Dendritic cell treated with granulocyte-macrophage colony-stimulating factor and Interleukin-4, amounts not matched to agents 40 ng/mL and 50 ng/mL, for 4 days (primary cell): ENCODE measurements at regions of chr11 and their contacts with region 1.

Region 1: GRCh38 chr11:47552566-47553416 is at the start of gene CELF1:
- H3K4me3 Mint-ChIP-seq: peak within 1 kb of the TSS; percentile 97
- H3K27ac Mint-ChIP-seq: peak within 1 kb of the TSS; percentile 99
- H3K4me1 Mint-ChIP-seq: peaks cover 46% of the 10 kb centered on the region
- H3K27me3 Mint-ChIP-seq: no peaks in the 10 kb centered on the region

Region 2: GRCh38 chr11:47355283-47356128 is 197.3 kb before region 1 on chr11:
- intact Hi-C with region 1: no loop called
- H3K4me3 Mint-ChIP-seq: no peak overlapping the region
- H3K27ac Mint-ChIP-seq: no peak overlapping the region
- H3K4me1 Mint-ChIP-seq: peaks cover 4% of the 10 kb centered on the region
- H3K27me3 Mint-ChIP-seq: no peaks in the 10 kb centered on the region

Region 3: GRCh38 chr11:47499614-47500013 is 53.2 kb before region 1 on chr11:
- intact Hi-C with region 1: loop called (anchors 2 kb)
- H3K4me3 Mint-ChIP-seq: no peak overlapping the region
- H3K27ac Mint-ChIP-seq: no peak overlapping the region
- H3K4me1 Mint-ChIP-seq: peaks cover 49% of the 10 kb centered on the region
- H3K27me3 Mint-ChIP-seq: no peaks in the 10 kb centered on the region

Region 4: GRCh38 chr11:47514825-47515647 is 37.8 kb before region 1 on chr11:
- intact Hi-C with region 1: loop called (anchors 5 kb)
- H3K4me3 Mint-ChIP-seq: peak overlapping the region; percentile 50
- H3K27ac Mint-ChIP-seq: peak overlapping the region; percentile 75
- H3K4me1 Mint-ChIP-seq: peaks cover 74% of the 10 kb centered on the region
- H3K27me3 Mint-ChIP-seq: no peaks in the 10 kb centered on the region

Region 5: DNA sequence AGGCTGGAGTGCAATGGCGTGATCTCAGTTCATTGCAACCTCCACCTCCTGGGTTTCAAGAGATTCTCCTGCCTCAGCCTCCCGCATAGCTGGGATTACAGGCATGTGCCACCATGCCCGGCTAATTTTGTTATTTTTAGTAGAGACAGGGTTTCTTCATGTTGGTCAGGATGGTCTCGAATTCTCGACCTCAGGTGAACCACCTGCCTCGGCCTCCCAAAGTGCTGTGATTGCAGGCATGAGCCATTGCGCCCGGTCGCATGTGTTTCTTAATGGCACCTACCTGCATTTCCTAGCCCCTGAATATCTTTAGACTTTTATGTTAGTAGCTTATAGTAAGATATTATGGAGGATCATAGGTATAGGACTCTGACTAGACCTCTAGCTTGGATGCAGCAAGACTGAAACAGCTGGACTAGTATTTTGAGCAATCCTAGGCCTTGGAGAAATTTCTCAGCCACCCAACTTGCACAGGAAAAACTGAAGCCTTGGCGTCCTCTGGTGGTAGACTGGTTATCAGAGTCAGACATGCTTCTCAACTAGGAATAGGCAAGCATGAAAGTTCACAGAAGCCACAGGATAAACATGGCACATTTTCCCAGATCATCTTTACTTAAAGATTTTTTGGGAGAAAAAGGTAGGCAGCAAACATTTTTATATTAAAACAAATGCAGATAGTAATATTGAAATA is 64.1 kb after region 1 on chr11:
- intact Hi-C with region 1: loop called (anchors 10 kb)
- H3K4me3 Mint-ChIP-seq: no peak overlapping the region
- H3K27ac Mint-ChIP-seq: no peak overlapping the region
- H3K4me1 Mint-ChIP-seq: peaks cover 13% of the 10 kb centered on the region
- H3K27me3 Mint-ChIP-seq: no peaks in the 10 kb centered on the region

Region 6: GRCh38 chr11:47628026-47628425 is 75.2 kb after region 1 on chr11:
- intact Hi-C with region 1: no loop called
- H3K4me3 Mint-ChIP-seq: no peak overlapping the region
- H3K27ac Mint-ChIP-seq: no peak overlapping the region
- H3K4me1 Mint-ChIP-seq: no peaks in the 10 kb centered on the region
- H3K27me3 Mint-ChIP-seq: no peaks in the 10 kb centered on the region